ENCODE measurements at regions of chr11 and their contacts with region 1.

Region 1: DNA sequence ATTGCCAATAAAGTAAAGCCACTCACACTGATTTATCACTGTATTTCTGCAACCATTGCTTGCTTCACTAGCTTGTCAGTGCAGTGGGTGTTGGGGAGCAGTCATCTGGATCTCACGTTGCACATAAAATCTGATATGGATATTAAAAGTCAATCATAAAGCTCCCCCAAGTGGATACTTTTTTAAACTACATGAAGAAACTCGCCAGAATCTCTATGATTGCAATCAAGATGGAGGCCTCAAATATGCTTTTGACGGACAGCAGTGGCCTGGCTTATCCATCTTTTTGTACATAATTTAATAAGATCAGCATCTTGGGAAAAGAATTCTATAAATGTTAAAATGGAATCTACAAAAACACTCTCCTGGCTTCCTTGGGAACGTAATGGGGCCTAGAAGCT is 137.7 kb downstream of the WT1 start:
- DNase-seq: no peak
- H3K4me3 ChIP-seq: no peak overlapping the region
- H3K27ac ChIP-seq: no peak overlapping the region
- H3K27me3 ChIP-seq: no peaks in the 10 kb centered on the region
- CTCF ChIP-seq: peak; percentile 40; the same call in 1 of the 2 replicates

Region 2: GRCh38 chr11:32279672-32280071 is 17.9 kb before region 1 on chr11:
- CTCF ChIA-PET with region 1: interaction called, 11 read pairs
- POLR2A ChIA-PET with region 1: no interaction called
- DNase-seq: no peak
- H3K4me3 ChIP-seq: no peak overlapping the region
- H3K27ac ChIP-seq: no peak overlapping the region
- H3K27me3 ChIP-seq: no peaks in the 10 kb centered on the region
- CTCF ChIP-seq: 0 out of 2 replicates have a peak, but pooled peaks have one; percentile 7

Measured in AG04450 (cell line).